Gastrocnemius medialis (tissue), 4 donors: ENCODE measurements at regions of chr17 and their contacts with region 1.

Region 1: GRCh38 chr17:39164675-39165143 is 1.3 kb downstream of the ARL5C start:
- DNase-seq: peak; percentile 82 to 89
- ATAC-seq: peak; percentile 86 to 92
- H3K4me3 ChIP-seq: peak overlapping the region; percentile 57 to 67 (median 58)
- H3K27ac ChIP-seq: peak overlapping the region; percentile 8 to 45 (median 28)
- H3K4me1 ChIP-seq: peaks cover 8 to 14% of the 10 kb centered on the region in 2 donors
- H3K27me3 ChIP-seq: no peaks in the 10 kb centered on the region
- CTCF ChIP-seq: peak; percentile 74 to 87 (median 86)
- POLR2A ChIP-seq: no peak

Region 2: DNA sequence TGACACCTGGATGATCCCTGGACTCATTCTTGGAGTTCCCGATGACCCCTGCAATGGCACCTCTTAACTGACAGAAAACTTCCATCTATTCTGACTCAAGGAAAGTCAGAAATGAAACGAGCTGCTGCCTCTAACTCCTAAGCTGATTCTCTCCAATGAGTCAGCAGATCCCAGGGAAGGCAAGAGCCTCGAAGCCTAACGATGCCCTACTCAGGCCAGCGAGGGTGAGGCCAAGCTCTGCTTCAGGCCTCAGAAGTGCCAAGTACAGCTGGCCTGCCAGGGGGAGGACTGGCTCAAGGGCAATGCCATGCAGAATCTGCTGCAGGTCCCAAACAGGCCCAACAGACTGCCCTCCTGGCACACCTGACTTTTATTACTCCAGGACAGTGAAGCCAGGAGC is 49.6 kb before region 1 on chr17:
- in situ Hi-C with region 1: no loop called
- intact Hi-C with region 1: no loop called
- DNase-seq: no peak
- ATAC-seq: no peak
- H3K4me3 ChIP-seq: no peak overlapping the region
- H3K27ac ChIP-seq: peak overlapping the region in 1 of 4 donors; percentile 10
- H3K4me1 ChIP-seq: peaks cover 0 to 5% of the 10 kb centered on the region in 2 donors
- H3K27me3 ChIP-seq: no peaks in the 10 kb centered on the region
- CTCF ChIP-seq: no peak
- POLR2A ChIP-seq: no peak

Region 3: DNA sequence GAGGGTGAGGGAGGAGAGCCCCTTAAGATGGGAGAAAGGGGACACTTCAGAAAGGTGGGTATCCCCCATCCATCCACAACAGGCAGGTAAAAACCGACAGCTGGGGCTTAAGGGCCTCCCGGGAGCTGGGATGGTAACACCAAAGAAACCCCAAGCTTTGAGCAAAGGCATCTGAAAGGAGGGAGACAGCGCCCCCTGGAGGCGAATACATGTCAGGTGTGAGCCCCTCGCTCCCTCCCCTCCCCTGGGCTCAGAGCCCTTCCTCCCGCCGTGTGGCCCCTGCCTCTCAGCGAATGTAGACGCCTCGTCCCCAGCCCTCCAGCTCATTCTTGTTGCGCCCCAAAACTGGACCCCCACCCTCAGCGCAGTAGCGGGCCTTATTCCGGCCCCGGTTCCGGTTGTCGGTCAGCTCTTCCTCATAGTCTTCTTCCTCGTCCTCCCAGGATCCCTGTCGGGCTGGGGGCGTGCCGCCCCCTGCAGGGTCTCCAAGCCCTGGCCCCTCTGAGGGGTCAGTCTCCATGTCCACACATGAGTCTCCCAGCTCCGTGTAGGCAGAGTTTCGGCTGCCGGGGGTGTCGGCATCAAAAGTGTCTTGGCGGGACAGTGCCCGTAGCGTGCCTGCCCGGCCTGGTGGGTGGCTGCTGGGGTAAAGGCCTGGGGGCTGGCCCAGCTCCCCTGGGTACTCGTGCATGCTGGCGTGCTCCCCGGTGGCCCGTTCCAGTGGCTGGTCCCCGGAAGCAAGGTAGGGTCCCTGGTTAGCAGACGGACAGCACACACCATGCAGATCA is 10.4 kb after region 1 on chr17:
- in situ Hi-C with region 1: no loop called
- intact Hi-C with region 1: loop called (anchors 1 kb)
- DNase-seq: peak; percentile 55 to 77
- ATAC-seq: peak; percentile 68
- H3K4me3 ChIP-seq: no peak overlapping the region
- H3K27ac ChIP-seq: peak overlapping the region; percentile 66 to 81 (median 72)
- H3K4me1 ChIP-seq: peaks cover 12 to 26% of the 10 kb centered on the region in 2 donors
- H3K27me3 ChIP-seq: no peaks in the 10 kb centered on the region
- CTCF ChIP-seq: peak; percentile 77 to 94 (median 84)
- POLR2A ChIP-seq: no peak

Region 4: GRCh38 chr17:39235555-39236449 is 71.1 kb after region 1 on chr17:
- in situ Hi-C with region 1: loop called in 2 of 4 experiments (anchors 10 kb)
- intact Hi-C with region 1: no loop called
- DNase-seq: no peak
- ATAC-seq: peak; percentile 41 to 72
- H3K4me3 ChIP-seq: no peak overlapping the region
- H3K27ac ChIP-seq: no peak overlapping the region
- H3K4me1 ChIP-seq: peaks cover 7 to 14% of the 10 kb centered on the region in 2 donors
- H3K27me3 ChIP-seq: peaks cover 0 to 2% (median 0%) of the 10 kb centered on the region in 3 donors
- CTCF ChIP-seq: peak; percentile 41 to 70 (median 49)
- POLR2A ChIP-seq: no peak

Region 5: DNA sequence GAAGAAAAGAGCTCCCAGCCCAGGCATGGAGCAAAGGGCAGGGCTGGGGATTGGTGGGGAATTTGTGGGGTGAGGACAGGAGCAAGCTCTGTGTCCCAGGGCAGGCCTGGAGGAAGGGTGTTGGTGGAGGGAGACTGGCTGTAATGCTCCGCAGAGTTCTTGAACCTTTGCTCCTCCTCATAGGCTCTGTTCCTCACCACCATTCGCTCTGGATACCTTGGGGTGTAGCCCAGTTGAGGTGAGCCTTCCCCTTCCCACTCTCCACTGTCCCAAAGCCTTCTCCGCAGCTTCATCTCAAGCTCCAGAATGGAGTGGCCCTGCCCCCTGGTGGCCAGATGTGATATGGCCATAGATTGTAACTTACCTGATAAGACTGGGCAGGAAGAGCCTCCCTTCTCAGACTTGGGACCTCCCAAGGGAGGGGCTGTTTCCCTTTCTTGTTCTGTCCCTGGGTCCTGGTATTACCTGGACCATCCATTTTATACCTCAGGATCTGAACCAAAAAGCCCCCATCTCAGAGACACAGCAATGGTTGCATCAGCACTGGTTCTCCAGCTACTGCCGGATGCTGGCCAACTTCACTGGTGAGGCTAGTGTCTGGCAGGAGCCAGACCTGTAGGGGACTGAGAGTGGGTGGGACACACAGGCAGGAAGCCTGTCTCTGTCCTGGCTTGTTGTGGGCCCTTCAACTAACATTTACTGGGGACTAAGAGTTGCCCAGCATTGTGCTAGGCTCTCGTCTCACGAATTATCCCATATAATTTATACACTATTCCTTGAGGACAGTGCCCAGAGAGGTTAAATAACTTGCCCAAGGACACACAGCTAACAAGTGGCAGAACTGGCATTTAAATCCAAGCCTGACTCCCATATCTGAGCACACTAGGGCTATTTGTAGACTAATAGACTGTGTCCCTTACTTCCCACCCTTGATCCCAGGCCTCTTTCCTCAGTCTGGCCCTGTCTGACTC is 80.2 kb after region 1 on chr17:
- in situ Hi-C with region 1: loop called in 1 of 4 experiments (anchors 10 kb)
- intact Hi-C with region 1: loop called (anchors 2 kb)
- DNase-seq: peak; percentile 70 to 81
- ATAC-seq: peak; percentile 82 to 91
- H3K4me3 ChIP-seq: no peak overlapping the region
- H3K27ac ChIP-seq: no peak overlapping the region
- H3K4me1 ChIP-seq: peaks cover 0 to 6% of the 10 kb centered on the region in 2 donors
- H3K27me3 ChIP-seq: no peaks in the 10 kb centered on the region
- CTCF ChIP-seq: peak; percentile 74 to 98 (median 95)
- POLR2A ChIP-seq: no peak

Region 6: GRCh38 chr17:40499551-40500174 is 1335.0 kb after region 1 on chr17:
- in situ Hi-C with region 1: no loop called
- intact Hi-C with region 1: no loop called
- DNase-seq: peak; percentile 81 to 93
- ATAC-seq: peak; percentile 94 to 95
- H3K4me3 ChIP-seq: peak overlapping the region; percentile 11 to 20 (median 18)
- H3K27ac ChIP-seq: peak overlapping the region; percentile 55 to 76 (median 63)
- H3K4me1 ChIP-seq: peaks cover 16 to 18% of the 10 kb centered on the region in 2 donors
- H3K27me3 ChIP-seq: no peaks in the 10 kb centered on the region
- CTCF ChIP-seq: peak in 2 of 5 experiments; percentile 10 to 19
- POLR2A ChIP-seq: no peak